Right cardiac atrium (tissue), 5 donors: ENCODE measurements at regions of chr17 and their contacts with region 1.

Region 1: DNA sequence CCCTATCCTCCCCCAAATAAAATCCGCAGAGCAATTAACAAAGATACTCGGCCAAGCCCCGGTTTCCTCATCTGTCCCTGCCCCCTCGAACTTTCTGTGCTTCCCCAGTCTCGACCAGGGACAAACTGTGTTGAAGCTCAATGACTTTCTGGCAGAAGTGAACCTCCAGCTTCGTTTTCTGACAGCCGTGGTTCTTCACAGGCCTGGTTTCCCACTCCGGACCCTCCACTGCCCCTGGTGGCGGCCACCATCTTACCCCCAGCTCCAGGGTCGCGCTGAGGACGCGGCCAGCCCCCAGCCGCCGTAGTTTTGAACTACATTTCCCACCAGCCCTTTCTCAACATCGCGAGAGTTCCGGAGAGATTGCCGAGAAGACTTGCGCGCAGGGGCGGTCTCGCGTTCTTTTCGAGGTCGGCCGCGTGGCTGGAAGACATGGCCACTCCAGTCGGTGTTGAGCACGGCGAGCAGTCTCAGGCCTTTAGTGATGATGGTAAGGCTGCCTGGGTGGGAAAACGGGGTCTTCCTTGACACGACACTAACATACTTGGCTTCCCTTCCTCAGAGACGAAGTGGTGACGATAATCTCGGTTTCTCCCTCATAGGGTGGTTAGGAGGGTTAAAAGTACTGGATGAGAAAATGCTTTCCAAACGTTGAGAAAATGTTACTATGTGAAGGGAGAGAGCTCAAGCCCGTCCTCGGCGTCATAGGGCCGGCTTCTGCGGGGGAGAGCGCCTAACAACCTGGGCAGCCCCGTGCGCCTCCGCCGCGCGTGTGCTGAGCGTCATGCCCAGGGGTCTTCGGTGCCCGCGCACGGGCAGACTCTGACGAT is 17.7 kb downstream of the PRCD start:
- DNase-seq: peak; percentile 95 to 97 (median 97)
- ATAC-seq: peak; percentile 93 to 94
- H3K4me3 ChIP-seq: peak overlapping the region; percentile 80
- H3K27ac ChIP-seq: peak overlapping the region; percentile 92
- H3K4me1 ChIP-seq: peaks cover 2% of the 10 kb centered on the region
- H3K27me3 ChIP-seq: no peaks in the 10 kb centered on the region

Region 2: GRCh38 chr17:75877752-75878173 is 679.8 kb before region 1 on chr17:
- intact Hi-C with region 1: no loop called
- DNase-seq: peak; percentile 72 to 93 (median 90)
- ATAC-seq: peak; percentile 67 to 69
- H3K4me3 ChIP-seq: peak overlapping the region; percentile 66
- H3K27ac ChIP-seq: peak overlapping the region; percentile 91
- H3K4me1 ChIP-seq: peaks cover 19% of the 10 kb centered on the region
- H3K27me3 ChIP-seq: no peaks in the 10 kb centered on the region

Region 3: GRCh38 chr17:75950821-75951554 is 606.6 kb before region 1 on chr17:
- intact Hi-C with region 1: no loop called
- DNase-seq: no peak
- ATAC-seq: no peak
- H3K4me3 ChIP-seq: no peak overlapping the region
- H3K27ac ChIP-seq: no peak overlapping the region
- H3K4me1 ChIP-seq: no peaks in the 10 kb centered on the region
- H3K27me3 ChIP-seq: no peaks in the 10 kb centered on the region

Region 4: DNA sequence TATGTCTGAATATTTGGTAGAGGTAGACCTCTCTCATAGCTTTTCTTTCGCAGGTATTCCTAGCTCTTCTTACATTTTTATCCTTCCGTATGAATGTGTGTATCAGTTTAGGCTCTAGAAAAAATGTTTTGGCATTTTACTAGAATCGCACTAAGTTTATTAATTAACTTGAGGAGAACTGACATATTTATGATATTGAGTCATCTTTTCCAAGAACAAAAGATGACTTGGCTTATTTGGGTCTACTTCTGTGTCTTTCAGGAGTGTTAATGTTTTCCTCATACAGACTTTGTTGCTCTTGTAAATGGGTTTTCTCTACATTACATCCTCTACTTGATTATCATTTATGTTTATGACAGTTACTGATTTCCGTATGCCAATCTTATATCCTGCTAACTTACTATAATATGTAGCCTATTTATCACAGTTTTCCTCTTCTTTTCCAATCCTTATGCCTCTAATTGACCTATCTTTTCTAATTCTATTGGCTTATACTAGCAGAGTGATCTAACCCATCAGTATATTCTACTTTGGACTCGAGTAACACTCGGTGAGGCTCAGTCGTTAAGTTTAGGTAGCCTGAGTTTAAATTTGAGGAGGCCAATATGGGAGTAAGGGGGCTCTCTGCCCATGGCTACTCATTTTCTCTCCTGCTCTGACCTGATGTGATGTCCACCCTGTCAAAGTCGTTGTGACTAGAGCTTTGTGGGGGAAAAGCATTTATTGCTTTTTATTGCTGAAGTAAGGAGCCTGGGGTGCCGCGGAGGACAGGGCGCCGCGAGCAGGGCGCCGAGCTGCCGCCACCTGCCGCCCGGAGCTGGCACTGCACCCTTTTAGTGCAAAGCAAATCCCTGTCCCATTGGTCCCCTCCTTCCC is 65.9 kb after region 1 on chr17:
- intact Hi-C with region 1: loop called in 2 of 4 experiments (anchors 5 kb)
- DNase-seq: peak; percentile 74 to 91 (median 90)
- ATAC-seq: peak; percentile 87 to 91
- H3K4me3 ChIP-seq: no peak overlapping the region
- H3K27ac ChIP-seq: no peak overlapping the region
- H3K4me1 ChIP-seq: no peaks in the 10 kb centered on the region
- H3K27me3 ChIP-seq: no peaks in the 10 kb centered on the region

Region 5: GRCh38 chr17:76714822-76715495 is 157.4 kb after region 1 on chr17:
- intact Hi-C with region 1: loop called in 1 of 4 experiments (anchors 10 kb)
- DNase-seq: peak; percentile 69 to 91 (median 83)
- ATAC-seq: no peak
- H3K4me3 ChIP-seq: no peak overlapping the region
- H3K27ac ChIP-seq: no peak overlapping the region
- H3K4me1 ChIP-seq: peaks cover 7% of the 10 kb centered on the region
- H3K27me3 ChIP-seq: no peaks in the 10 kb centered on the region